ENCODE measurements at regions of chr12 and their contacts with region 1.

Region 1: DNA sequence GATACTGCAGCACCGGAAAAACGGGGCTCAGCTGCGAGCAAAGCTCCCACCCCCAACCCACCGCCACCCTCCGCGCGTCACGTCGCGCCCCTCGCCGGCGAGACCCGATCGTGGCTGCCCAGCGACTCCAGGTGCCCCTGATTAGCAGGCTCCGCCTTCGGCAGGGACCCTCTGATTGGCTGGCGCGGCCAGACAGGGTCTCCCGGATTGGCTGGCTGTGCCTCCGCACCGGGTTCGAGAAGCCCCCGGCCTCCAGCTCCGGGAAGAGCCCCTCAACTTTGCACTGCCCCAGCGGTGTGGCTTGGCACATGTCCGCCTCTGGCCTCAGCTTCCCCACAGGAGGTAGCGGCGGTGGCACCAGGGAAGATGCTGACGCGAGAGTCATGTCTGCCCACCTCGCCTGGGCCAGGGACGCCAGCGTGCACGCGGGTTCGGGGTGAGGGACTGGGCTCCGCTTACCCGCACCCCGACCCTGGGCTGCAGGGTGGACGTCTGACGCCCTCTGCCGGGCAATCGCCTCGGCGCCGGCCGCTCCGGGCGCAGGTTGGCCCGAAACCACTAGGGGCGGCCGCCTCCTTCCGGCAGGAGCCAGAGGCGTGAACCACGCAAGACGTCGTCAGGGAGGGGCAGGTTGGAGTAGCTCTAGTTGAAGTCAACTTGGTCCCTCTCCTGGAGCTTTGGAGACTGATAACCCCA is 498 bp upstream of the RHOF start:
- H3K4me3 ChIP-seq: peak overlapping the region; percentile 50
- H3K27ac ChIP-seq: peak overlapping the region; percentile 0; the same call in 1 of the 2 replicates
- H3K4me1 ChIP-seq: peaks cover 17% of the 10 kb centered on the region
- CTCF ChIP-seq: peak; percentile 100

Region 2: GRCh38 chr12:121550974-121551634 is 242.9 kb before region 1 on chr12:
- CTCF ChIA-PET with region 1: interaction called, 18 read pairs
- POLR2A ChIA-PET with region 1: no interaction called
- H3K4me3 ChIP-seq: no peak overlapping the region
- H3K27ac ChIP-seq: no peak overlapping the region
- H3K4me1 ChIP-seq: no peaks in the 10 kb centered on the region
- CTCF ChIP-seq: no peak

Region 3: DNA sequence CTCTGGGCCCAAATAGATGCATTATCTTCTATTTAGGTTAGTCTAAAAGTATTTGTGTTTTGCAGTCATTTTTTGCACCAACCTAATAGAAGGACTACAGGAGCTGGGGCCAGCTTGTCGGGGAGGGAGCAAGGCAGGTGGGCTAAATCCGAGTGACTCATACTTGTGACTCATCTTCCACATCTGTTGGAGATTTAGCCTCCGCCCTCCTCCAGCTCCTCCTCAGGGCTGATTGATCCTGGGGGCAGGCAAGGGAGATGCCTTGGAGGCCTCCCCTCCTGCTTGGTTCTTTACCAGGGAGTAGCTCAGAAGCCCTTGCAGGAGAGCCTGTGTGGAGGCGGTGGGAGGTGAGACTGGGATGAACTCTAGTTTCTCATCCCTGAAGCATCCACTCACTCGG is 28.4 kb before region 1 on chr12:
- CTCF ChIA-PET with region 1: interaction called, 20 read pairs
- POLR2A ChIA-PET with region 1: interaction called, 3 read pairs
- H3K4me3 ChIP-seq: no peak overlapping the region
- H3K27ac ChIP-seq: no peak overlapping the region
- H3K4me1 ChIP-seq: peaks cover 8% of the 10 kb centered on the region
- CTCF ChIP-seq: no peak

Region 4: DNA sequence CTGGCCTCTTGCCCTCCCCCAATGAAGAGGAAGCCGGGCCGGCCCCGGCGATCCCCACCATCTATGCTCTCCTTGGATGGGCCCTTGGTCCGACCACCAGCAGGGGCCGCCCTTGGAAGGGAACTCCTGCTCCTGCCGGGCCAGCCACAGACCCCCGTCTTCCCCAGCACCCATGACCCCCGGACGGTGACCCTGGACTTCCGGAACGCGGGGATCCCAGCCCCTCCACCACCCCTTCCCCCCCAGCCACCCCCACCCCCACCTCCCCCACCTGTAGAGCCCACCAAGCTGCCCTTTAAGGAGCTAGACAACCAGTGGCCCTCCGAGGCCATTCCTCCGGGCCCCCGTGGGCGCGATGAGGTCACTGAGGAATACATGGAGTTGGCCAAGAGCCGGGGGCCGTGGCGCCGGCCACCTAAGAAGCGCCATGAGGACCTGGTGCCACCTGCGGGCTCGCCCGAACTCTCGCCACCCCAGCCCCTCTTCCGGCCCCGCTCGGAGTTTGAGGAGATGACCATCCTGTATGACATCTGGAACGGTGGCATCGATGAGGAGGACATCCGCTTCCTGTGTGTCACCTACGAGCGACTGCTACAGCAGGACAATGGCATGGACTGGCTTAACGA is 29.2 kb after region 1 on chr12:
- CTCF ChIA-PET with region 1: interaction called, 16 read pairs
- POLR2A ChIA-PET with region 1: interaction called, 3 read pairs
- H3K4me3 ChIP-seq: no peak overlapping the region
- H3K27ac ChIP-seq: no peak overlapping the region
- H3K4me1 ChIP-seq: no peaks in the 10 kb centered on the region
- CTCF ChIP-seq: no peak

Region 5: DNA sequence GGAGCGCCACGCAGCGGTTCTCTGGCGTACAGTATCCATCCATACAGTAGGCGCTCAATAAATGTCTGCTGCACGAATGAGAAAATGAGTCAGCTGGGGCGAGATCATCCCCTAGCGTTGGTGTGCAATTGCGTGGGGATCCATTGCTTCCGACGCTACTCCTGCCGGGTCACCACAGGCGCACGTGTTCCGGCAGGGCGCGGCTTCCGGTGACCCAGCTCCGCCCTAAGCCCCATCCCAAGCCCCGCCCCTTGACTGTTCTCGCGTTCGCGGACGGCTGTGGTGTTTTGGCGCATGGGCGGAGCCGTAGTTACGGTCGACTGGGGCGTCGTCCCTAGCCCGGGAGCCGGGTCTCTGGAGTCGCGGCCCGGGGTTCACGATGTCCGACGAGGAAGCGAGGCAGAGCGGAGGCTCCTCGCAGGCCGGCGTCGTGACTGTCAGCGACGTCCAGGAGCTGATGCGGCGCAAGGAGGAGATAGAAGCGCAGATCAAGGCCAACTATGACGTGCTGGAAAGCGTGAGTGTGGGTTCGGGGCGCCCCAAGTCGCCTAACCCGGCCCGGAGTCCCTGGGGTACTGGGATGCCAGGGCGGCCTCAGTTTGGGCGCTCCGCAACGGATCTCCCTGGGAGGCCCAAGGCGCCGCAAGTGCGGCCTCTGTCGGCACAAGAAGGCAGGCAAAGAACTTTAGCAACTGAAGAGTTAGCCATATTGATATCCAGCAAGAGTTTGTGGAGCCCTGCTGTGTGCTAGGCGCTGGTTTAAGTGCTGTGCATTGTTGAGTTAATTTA is 94.7 kb after region 1 on chr12 and contains the start of gene PSMD9:
- CTCF ChIA-PET with region 1: interaction called, 154 read pairs
- POLR2A ChIA-PET with region 1: interaction called, 24 read pairs
- H3K4me3 ChIP-seq: peak within 1 kb of the TSS; percentile 81
- H3K27ac ChIP-seq: peak within 1 kb of the TSS; percentile 84
- H3K4me1 ChIP-seq: peaks cover 9% of the 10 kb centered on the region; the same call in 1 of the 2 replicates
- CTCF ChIP-seq: peak; percentile 97

Region 6: GRCh38 chr12:121916719-121917118 is 122.7 kb after region 1 on chr12:
- CTCF ChIA-PET with region 1: interaction called, 12 read pairs
- POLR2A ChIA-PET with region 1: no interaction called
- H3K4me3 ChIP-seq: no peak overlapping the region
- H3K27ac ChIP-seq: no peak overlapping the region
- H3K4me1 ChIP-seq: no peaks in the 10 kb centered on the region
- CTCF ChIP-seq: 0 out of 2 replicates have a peak, but pooled peaks have one; percentile 23

Measured in HEK293 (cell line).